ENCODE measurements at regions of chr1 and their contacts with region 1.

Region 1: GRCh38 chr1:38990738-38991639 is at the start of gene AKIRIN1:
- DNase-seq: peak; percentile 88
- ATAC-seq: peak; percentile 87
- H3K4me3 ChIP-seq: peak within 1 kb of the TSS; percentile 83 to 96 (median 92)
- H3K27ac ChIP-seq: peak within 1 kb of the TSS; percentile 85
- H3K4me1 ChIP-seq: peaks cover 75% of the 10 kb centered on the region
- H3K27me3 ChIP-seq: no peaks in the 10 kb centered on the region; a peak in 1 of 5 replicates
- CTCF ChIP-seq: 0 out of 2 replicates have a peak, but pooled peaks have one; percentile 10
- EP300 ChIP-seq: peak in 1 of 2 experiments; percentile 27; a peak in 1 of 4 replicates
- POLR2A ChIP-seq: peak; percentile 92 to 93
- RAD21 ChIP-seq: peak; percentile 80
- total RNA-seq, gene AKIRIN1: 123 and 154 TPM in 2 replicates

Region 2: DNA sequence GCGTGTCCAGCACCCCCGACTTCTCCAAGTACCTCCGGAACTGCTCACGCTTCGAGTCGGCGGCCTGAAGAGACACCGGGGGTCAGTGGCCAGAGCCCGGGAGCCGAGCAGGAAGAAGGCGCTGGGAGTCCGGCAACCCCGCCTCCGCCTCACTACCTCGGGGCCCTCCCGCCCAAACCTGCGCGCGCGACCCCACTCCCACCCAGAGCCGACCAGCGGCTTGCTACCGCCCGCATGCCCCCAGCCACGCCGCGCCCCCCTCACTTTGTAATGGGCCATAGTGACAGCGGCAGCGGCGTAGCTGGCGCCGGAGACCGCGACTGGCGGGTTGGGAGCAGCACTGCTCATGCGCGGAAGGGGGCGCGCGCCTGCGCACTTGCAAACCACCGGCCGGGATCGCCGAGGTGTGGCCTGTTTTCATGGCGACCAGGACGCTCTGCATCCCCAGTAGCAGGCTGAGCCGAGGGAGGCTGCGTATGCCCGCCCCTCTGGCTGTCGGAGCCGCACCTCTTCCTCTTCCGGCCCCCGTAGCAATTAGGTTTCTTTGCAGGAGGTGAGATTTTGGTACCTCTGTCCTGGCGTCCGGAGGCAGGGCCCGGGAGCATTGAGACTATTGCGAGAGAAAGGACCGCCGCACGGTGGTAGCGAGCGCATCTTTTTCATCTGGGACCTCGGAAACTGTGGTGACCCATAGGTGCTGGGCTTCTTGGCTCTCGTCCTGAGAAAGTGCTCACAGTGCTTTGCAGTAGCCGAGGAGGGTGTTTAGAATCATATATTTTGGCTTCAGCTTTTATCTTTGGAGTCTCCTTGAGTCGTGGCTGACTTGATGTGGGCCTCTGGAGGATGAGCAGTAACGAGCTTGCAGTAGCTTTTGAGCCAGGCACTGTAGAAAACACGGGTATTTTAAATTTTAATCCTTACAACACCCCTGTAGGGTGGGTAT is 117.7 kb before region 1 on chr1 and contains the start of gene MYCBP:
- CTCF ChIA-PET with region 1: no interaction called
- POLR2A ChIA-PET with region 1: no interaction called
- in situ Hi-C with region 1: no loop called
- intact Hi-C with region 1: loop called (anchors 5 kb)
- DNase-seq: peak; percentile 89
- ATAC-seq: peak; percentile 99
- H3K4me3 ChIP-seq: peak within 1 kb of the TSS; percentile 70 to 94 (median 77)
- H3K27ac ChIP-seq: peak within 1 kb of the TSS; percentile 49
- H3K4me1 ChIP-seq: peaks cover 36% of the 10 kb centered on the region
- H3K27me3 ChIP-seq: no peaks in the 10 kb centered on the region
- CTCF ChIP-seq: peak; percentile 32
- EP300 ChIP-seq: no peak
- POLR2A ChIP-seq: peak in 1 of 2 experiments; percentile 54; a peak in 1 of 4 replicates
- RAD21 ChIP-seq: no peak; the same call in 1 of the 2 replicates
- total RNA-seq, gene MYCBP: 30.4 and 48.0 TPM in 2 replicates

Region 3: GRCh38 chr1:38908821-38909220 is 82.2 kb before region 1 on chr1:
- CTCF ChIA-PET with region 1: no interaction called
- POLR2A ChIA-PET with region 1: no interaction called
- in situ Hi-C with region 1: no loop called
- intact Hi-C with region 1: no loop called
- DNase-seq: no peak
- ATAC-seq: no peak
- H3K4me3 ChIP-seq: no peak overlapping the region
- H3K27ac ChIP-seq: no peak overlapping the region
- H3K4me1 ChIP-seq: peaks cover 8% of the 10 kb centered on the region
- H3K27me3 ChIP-seq: no peaks in the 10 kb centered on the region
- CTCF ChIP-seq: no peak
- EP300 ChIP-seq: no peak
- POLR2A ChIP-seq: no peak
- RAD21 ChIP-seq: no peak

Region 4: DNA sequence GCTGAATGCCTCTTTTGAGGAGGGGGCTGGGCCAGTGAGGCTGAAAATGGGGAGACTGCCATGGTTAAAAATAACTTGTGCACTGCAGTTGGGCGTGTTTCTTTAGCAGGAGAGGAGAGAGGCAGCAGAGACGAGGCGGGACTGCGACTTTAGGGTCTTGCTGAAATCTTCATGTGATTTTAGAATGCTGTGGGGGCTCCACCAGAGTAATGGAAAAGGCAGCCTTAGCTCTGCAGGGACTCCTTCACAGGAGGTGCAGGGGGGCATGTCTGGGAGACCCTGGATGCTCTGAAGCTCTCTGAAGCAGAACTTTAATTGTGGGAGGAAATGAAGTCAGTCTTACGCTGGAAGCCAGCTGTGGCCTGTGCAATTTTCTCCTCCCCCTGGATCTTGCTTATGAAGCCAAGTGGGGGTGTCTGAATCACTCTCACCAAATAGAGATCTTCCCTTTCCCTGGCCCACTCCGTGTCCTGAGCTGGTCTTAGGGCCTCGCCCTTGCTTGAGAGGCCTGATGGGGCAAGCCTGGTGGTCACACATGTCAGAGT is 95.9 kb after region 1 on chr1:
- CTCF ChIA-PET with region 1: no interaction called
- POLR2A ChIA-PET with region 1: no interaction called
- in situ Hi-C with region 1: no loop called
- intact Hi-C with region 1: no loop called
- DNase-seq: no peak
- ATAC-seq: no peak
- H3K4me3 ChIP-seq: no peak overlapping the region
- H3K27ac ChIP-seq: no peak overlapping the region
- H3K4me1 ChIP-seq: peaks cover 17% of the 10 kb centered on the region
- H3K27me3 ChIP-seq: peaks cover 1 to 16% of the 10 kb centered on the region in 2 experiments
- CTCF ChIP-seq: no peak
- EP300 ChIP-seq: no peak
- POLR2A ChIP-seq: no peak
- RAD21 ChIP-seq: no peak

Region 5: GRCh38 chr1:39098546-39099250 is 107.7 kb after region 1 on chr1:
- CTCF ChIA-PET with region 1: no interaction called
- POLR2A ChIA-PET with region 1: no interaction called
- in situ Hi-C with region 1: no loop called
- intact Hi-C with region 1: no loop called
- DNase-seq: peak; percentile 65
- ATAC-seq: peak; percentile 83
- H3K4me3 ChIP-seq: no peak overlapping the region
- H3K27ac ChIP-seq: no peak overlapping the region
- H3K4me1 ChIP-seq: peaks cover 18% of the 10 kb centered on the region
- H3K27me3 ChIP-seq: no peaks in the 10 kb centered on the region
- CTCF ChIP-seq: peak; percentile 83
- EP300 ChIP-seq: no peak
- POLR2A ChIP-seq: no peak
- RAD21 ChIP-seq: peak; percentile 84

Measured in HepG2 (cell line).